ENCODE measurements at regions of chr15 and their contacts with region 1.

Region 1: GRCh38 chr15:47987908-47988532 is 132.8 kb upstream of the SLC24A5 start:
- DNase-seq: peak; percentile 68
- H3K4me3 ChIP-seq: no peak overlapping the region
- H3K27ac ChIP-seq: no peak overlapping the region
- H3K4me1 ChIP-seq: no peaks in the 10 kb centered on the region
- H3K27me3 ChIP-seq: no peaks in the 10 kb centered on the region
- CTCF ChIP-seq: peak; percentile 40 to 47
- POLR2A ChIP-seq: no peak

Region 2: GRCh38 chr15:46312133-46312740 is 1675.8 kb before region 1 on chr15:
- CTCF ChIA-PET with region 1: interaction called, 19 read pairs
- POLR2A ChIA-PET with region 1: no interaction called
- dilution Hi-C with region 1: no loop called
- intact Hi-C with region 1: loop called (anchors 1 kb)
- DNase-seq: peak; percentile 71
- H3K4me3 ChIP-seq: no peak overlapping the region
- H3K27ac ChIP-seq: no peak overlapping the region
- H3K4me1 ChIP-seq: no peaks in the 10 kb centered on the region
- H3K27me3 ChIP-seq: peaks cover 0 to 3% of the 10 kb centered on the region in 2 experiments
- CTCF ChIP-seq: peak; percentile 82 to 86
- POLR2A ChIP-seq: no peak

Region 3: DNA sequence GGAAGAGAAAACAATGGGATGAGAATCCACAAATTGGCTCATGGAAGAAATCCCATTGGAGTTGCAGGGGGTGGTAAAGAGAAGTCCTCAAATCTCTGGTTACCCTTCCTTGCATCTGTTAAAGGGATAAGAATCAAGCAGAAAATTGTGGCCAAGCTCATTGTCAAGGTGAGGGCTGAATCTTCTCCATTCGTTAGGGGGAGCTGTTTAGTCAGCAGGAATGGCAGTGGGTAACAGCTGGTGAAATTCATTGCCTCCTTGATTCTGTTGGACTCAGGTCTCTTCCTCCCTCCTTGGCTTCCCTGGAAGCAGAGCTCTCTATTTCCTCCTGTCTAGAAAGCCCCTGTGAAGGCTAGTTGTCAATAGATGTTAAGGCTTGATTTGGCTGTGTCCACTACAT is 613.8 kb before region 1 on chr15:
- CTCF ChIA-PET with region 1: interaction called, 36 read pairs
- POLR2A ChIA-PET with region 1: no interaction called
- dilution Hi-C with region 1: no loop called
- intact Hi-C with region 1: loop called (anchors 2 kb)
- DNase-seq: peak; percentile 52
- H3K4me3 ChIP-seq: no peak overlapping the region
- H3K27ac ChIP-seq: no peak overlapping the region
- H3K4me1 ChIP-seq: no peaks in the 10 kb centered on the region
- H3K27me3 ChIP-seq: no peaks in the 10 kb centered on the region
- CTCF ChIP-seq: peak; percentile 36 to 49
- POLR2A ChIP-seq: no peak

Region 4: DNA sequence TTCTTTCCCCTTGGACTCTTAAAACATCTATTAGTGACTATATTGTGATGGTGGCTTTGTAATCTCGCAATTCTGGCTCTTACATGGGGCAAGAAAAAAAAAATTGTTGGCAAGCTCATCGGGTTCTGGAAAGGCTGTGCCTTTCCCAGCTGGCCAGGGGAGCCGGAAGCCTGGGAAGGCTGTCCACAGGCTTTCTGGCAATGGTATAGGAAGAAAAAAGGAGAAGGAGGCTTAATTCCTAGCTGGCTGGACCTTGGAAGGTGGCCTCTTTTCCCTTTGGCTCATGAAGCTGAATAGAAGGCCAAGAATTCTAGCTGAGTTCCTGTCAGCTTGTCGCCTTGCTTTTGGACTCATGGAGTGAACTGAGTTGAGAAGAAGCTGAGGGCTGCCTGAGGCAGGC is 514.2 kb before region 1 on chr15:
- CTCF ChIA-PET with region 1: interaction called, 36 read pairs
- POLR2A ChIA-PET with region 1: no interaction called
- dilution Hi-C with region 1: no loop called
- intact Hi-C with region 1: loop called (anchors 1 kb)
- DNase-seq: peak; percentile 91
- H3K4me3 ChIP-seq: no peak overlapping the region
- H3K27ac ChIP-seq: no peak overlapping the region
- H3K4me1 ChIP-seq: peaks cover 10% of the 10 kb centered on the region
- H3K27me3 ChIP-seq: no peaks in the 10 kb centered on the region
- CTCF ChIP-seq: no peak
- POLR2A ChIP-seq: no peak

Region 5: GRCh38 chr15:47711654-47712053 is 276.4 kb before region 1 on chr15:
- CTCF ChIA-PET with region 1: interaction called, 29 read pairs
- POLR2A ChIA-PET with region 1: no interaction called
- dilution Hi-C with region 1: no loop called
- intact Hi-C with region 1: no loop called
- DNase-seq: peak; percentile 26
- H3K4me3 ChIP-seq: no peak overlapping the region
- H3K27ac ChIP-seq: no peak overlapping the region
- H3K4me1 ChIP-seq: peaks cover 17% of the 10 kb centered on the region
- H3K27me3 ChIP-seq: no peaks in the 10 kb centered on the region
- CTCF ChIP-seq: peak; percentile 24 to 39
- POLR2A ChIP-seq: no peak

Region 6: DNA sequence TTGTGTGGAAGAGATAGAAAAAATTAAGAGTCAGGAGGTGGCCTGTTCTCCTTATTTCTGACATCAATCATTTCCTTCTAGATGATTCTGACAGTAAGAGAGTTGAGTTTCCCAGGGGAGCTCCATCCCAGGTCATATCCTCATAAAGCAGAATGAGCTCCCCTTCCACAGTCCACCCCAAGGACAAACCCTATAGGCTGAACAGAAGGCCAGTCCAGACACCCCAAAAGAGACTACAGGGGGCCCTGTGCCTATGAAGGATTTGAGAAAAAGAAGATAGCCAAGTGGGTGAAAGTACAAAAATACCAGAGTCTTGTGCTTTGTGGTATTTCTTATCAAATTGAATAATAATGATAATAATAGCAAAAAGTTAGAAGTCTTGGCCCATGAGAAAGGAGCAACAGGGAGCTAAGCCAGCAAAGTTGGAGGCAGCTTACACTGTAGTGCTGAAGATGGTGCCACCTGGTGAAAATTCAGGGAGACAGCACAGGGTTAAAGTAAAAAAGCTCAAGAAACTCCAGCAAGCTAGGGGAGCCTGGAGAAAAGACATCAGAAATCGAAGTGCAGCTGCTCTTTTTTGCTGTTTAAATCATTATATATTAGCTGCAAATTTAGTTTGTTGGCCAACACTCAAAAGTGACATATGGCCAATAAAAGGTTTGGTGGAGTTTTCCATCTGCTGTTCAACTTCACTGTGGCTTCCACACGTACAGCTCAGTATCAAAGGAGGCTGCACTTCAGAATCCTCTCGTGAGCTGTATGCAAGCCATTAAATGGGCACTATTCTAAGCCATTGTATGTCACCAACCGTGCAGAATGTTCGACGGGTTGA is 97.0 kb after region 1 on chr15:
- CTCF ChIA-PET with region 1: interaction called, 19 read pairs
- POLR2A ChIA-PET with region 1: no interaction called
- dilution Hi-C with region 1: no loop called
- intact Hi-C with region 1: no loop called
- DNase-seq: peak; percentile 18
- H3K4me3 ChIP-seq: no peak overlapping the region
- H3K27ac ChIP-seq: no peak overlapping the region
- H3K4me1 ChIP-seq: no peaks in the 10 kb centered on the region
- H3K27me3 ChIP-seq: no peaks in the 10 kb centered on the region
- CTCF ChIP-seq: peak; percentile 29 to 47
- POLR2A ChIP-seq: no peak